Astrocyte of the cerebellum (primary cell): ENCODE measurements at regions of chr4 and their contacts with region 1.

Region 1: GRCh38 chr4:174559894-174560293 is 37.6 kb upstream of the HPGD start:
- DNase-seq: no peak
- H3K4me3 ChIP-seq: no peak overlapping the region
- CTCF ChIP-seq: no peak

Region 2: GRCh38 chr4:174635732-174636131 is 75.8 kb after region 1 on chr4:
- in situ Hi-C with region 1: loop called (anchors 5 kb)
- DNase-seq: no peak
- H3K4me3 ChIP-seq: no peak overlapping the region
- CTCF ChIP-seq: no peak